ENCODE measurements at regions of chr19 and their contacts with region 1.

Region 1: DNA sequence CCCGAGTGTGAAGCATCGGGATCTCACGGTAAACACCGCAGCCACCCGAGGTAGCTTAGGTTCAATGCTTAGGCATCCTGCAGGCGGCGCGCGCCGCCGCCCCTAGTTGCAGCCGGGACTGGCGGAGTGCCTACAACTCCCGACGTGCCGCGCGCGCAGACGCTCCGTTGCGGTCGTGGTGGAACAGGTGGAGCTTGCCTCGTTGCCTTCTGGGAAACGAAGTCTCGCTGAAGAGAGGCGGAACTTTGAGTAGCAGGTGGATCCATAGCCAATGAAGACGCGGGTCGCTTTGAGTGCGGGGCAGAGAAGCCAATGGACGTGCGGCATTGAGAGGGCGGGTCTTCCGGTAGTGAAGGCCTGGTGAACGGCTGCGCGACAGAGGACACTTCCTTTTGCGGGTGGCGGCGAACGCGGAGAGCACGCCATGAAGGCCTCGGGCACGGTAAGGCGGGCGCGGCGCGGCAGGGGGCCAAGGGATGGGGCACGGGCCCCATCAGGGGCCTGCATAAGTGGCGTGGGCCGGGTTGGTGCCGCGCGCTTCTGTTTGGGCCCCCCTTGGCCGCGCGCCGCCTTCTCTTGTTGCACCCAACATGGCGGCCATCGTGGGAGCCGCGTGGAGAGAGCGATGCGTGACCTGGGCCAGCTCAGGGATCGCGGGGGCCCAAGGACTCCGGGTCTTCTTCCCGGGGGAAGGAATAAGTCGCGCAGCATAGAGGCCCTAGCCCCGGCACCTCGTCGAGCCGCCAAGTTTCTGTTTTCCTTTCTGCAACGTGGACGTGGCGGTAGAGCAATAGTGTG is at the start of gene RPL18A:
- H3K4me3 ChIP-seq: peak within 1 kb of the TSS; percentile 100
- H3K27ac ChIP-seq: peak within 1 kb of the TSS; percentile 76
- H3K4me1 ChIP-seq: 0 out of 2 replicates have a peak, but pooled peaks cover 3% of the 10 kb centered on the region
- CTCF ChIP-seq: peak; percentile 97

Region 2: DNA sequence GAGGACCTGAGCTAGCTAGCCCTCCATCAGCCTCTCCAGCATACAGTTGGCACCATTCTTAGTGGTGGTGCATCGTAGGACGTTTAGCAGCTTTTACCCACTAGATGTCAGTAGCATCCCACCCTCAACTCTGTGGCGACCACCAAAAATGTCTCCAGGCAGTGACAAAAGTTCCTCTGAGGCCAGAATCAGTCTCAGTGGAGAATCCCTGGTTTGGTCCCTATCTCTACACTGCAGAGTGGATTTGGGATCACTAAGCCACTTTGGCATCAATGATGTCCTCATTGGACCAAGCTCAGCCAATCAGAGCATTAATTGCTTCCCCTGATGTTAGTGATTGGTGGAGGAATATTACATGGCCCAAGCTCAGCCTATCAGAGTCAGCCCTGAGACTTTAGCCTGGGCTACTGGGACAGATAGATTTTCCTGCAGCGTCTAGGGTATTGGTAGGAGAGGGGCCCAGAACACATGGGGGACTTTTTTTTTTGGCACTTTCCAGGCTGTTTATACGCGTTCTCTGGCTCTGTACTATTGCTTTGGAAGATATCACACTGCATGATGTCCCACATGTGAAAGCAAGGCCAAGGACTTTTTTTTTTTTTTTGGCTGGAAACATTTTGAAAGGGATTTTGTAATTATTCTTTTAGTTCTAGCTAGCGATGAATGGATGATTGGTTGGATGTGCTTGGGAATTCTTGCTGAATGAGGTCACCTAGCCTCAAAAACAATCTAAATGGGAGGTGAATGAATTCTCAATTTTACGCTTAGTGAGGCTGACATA is 418.3 kb before region 1 on chr19:
- CTCF ChIA-PET with region 1: interaction called, 10 read pairs
- POLR2A ChIA-PET with region 1: interaction called, 4 read pairs
- H3K4me3 ChIP-seq: no peak overlapping the region
- H3K27ac ChIP-seq: no peak overlapping the region
- H3K4me1 ChIP-seq: no peaks in the 10 kb centered on the region
- CTCF ChIP-seq: peak; percentile 83

Region 3: GRCh38 chr19:17830567-17831418 is 28.9 kb before region 1 on chr19:
- CTCF ChIA-PET with region 1: interaction called, 6 read pairs
- POLR2A ChIA-PET with region 1: interaction called, 13 read pairs
- H3K4me3 ChIP-seq: peak overlapping the region; percentile 40
- H3K27ac ChIP-seq: no peak overlapping the region; the same call in 1 of the 2 replicates
- H3K4me1 ChIP-seq: no peaks in the 10 kb centered on the region
- CTCF ChIP-seq: no peak

Region 4: DNA sequence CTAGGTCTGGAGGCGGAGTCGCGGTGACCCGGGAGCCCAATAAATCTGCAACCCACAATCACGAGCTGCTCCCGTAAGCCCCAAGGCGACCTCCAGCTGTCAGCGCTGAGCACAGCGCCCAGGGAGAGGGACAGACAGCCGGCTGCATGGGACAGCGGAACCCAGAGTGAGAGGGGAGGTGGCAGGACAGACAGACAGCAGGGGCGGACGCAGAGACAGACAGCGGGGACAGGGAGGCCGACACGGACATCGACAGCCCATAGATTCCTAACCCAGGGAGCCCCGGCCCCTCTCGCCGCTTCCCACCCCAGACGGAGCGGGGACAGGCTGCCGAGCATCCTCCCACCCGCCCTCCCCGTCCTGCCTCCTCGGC is 12.1 kb after region 1 on chr19 and contains the start of gene SLC5A5:
- CTCF ChIA-PET with region 1: interaction called, 10 read pairs
- POLR2A ChIA-PET with region 1: interaction called, 12 read pairs
- H3K4me3 ChIP-seq: no peak within 1 kb of the TSS
- H3K27ac ChIP-seq: no peak within 1 kb of the TSS
- H3K4me1 ChIP-seq: peaks cover 3% of the 10 kb centered on the region; the same call in 1 of the 2 replicates
- CTCF ChIP-seq: no peak

Region 5: GRCh38 chr19:17889609-17890214 is 30.0 kb after region 1 on chr19:
- CTCF ChIA-PET with region 1: no interaction called
- POLR2A ChIA-PET with region 1: no interaction called
- H3K4me3 ChIP-seq: no peak overlapping the region
- H3K27ac ChIP-seq: no peak overlapping the region
- H3K4me1 ChIP-seq: no peaks in the 10 kb centered on the region
- CTCF ChIP-seq: no peak

Region 6: GRCh38 chr19:17938092-17938845 is 78.5 kb after region 1 on chr19:
- CTCF ChIA-PET with region 1: interaction called, 25 read pairs
- POLR2A ChIA-PET with region 1: interaction called, 86 read pairs
- H3K4me3 ChIP-seq: no peak overlapping the region
- H3K27ac ChIP-seq: no peak overlapping the region
- H3K4me1 ChIP-seq: no peaks in the 10 kb centered on the region
- CTCF ChIP-seq: peak; percentile 88

Region 7: DNA sequence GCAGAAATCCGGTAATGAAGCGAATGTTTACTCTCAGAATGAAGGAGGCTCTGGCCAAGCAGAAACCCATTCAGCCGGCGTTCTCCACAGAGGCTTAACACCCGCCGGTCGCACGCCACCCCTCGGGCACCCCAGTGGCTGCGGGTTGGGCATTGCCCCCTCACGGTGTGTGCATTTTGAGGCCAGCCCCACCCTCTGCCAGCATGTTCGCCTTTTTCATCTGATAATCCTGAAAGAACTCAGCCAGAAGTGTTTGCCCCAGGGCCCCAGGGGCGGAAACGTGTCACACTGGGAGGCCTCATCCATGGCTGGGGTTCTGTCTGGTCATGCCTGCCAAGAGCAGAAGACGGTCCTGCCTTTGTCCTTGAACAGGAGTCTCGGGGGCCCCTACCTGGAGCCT is 897.2 kb after region 1 on chr19:
- CTCF ChIA-PET with region 1: no interaction called
- POLR2A ChIA-PET with region 1: interaction called, 11 read pairs
- H3K4me3 ChIP-seq: no peak overlapping the region
- H3K27ac ChIP-seq: peak overlapping the region; percentile 50
- H3K4me1 ChIP-seq: peaks cover 2% of the 10 kb centered on the region; the same call in 1 of the 2 replicates
- CTCF ChIP-seq: no peak